Activated naive CD4-positive, alpha-beta T cell treated with anti-CD3 and anti-CD28 coated beads, Interleukin-2, amount 10 ng/mL, durations not matched to agents 7 days and 5 days (primary cell): ENCODE measurements at regions of chr7 and their contacts with region 1.

Region 1: DNA sequence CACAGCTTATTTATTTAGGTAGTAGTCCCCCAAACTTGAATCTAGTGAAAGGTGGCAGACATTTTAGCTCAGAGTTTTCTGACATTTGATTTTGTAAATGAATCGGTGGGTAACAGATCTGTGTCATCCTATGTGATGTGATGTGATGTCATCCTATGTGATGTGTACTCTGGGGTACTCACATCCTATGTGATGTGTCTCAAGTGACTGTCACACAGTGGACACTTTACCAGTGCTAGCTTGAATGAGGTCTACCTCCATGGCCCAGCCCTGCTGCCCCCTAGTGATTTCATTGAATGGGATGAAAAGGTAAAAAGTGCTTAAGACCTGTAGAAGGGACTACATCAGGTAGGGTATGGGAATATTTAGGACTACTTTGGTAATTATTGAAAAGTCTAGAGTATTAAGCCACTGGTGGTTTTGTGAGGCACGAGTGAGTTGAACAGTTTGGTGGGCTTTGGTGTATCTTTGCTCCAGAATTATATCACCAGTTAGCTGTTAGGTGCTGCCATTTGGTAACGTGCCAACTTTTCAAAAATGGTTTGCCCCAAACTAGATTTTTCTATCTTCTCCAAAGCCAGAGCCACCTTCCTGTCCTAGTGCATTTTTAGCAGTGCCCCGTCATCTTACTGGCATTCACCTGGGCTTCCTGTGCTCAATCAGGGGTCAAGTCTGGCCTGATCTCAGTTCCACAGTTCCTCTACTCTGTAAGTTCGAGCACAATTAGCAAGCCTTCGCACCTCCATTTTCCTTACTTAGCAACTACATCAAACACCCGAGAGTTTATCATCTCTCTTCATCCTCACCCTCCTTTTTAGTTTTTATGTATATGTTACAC is 9.7 kb downstream of the EIF4H start:
- DNase-seq: peak; percentile 31
- H3K4me3 Mint-ChIP-seq: no peak overlapping the region
- H3K27ac Mint-ChIP-seq: peak overlapping the region; percentile 33
- H3K4me1 Mint-ChIP-seq: peaks cover 60% of the 10 kb centered on the region
- H3K27me3 Mint-ChIP-seq: no peaks in the 10 kb centered on the region

Region 2: DNA sequence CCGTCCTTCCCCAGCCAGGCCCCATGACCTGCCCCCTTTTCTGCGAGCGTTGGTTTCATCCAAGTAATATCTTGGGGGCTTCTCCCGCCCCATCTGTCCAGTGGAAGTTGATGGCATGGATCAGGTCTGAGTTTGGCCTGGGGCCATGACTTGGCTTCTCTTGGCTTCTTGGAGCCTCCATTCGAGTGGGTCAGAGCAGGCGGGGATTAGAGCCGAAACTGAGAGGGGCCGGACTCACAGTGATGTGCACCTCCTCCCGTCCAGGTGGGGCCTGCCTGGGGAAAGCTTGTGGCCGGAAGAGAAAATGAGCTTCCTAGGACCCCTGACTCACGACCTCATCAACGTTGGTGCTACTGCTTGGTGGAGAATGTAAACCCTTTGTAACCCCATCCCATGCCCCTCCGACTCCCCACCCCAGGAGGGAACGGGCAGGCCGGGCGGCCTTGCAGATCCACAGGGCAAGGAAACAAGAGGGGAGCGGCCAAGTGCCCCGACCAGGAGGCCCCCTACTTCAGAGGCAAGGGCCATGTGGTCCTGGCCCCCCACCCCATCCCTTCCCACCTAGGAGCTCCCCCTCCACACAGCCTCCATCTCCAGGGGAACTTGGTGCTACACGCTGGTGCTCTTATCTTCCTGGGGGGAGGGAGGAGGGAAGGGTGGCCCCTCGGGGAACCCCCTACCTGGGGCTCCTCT is 115.3 kb before region 1 on chr7:
- CTCF ChIA-PET with region 1: interaction called, 11 read pairs
- DNase-seq: no peak
- H3K4me3 Mint-ChIP-seq: no peak overlapping the region
- H3K27ac Mint-ChIP-seq: no peak overlapping the region
- H3K4me1 Mint-ChIP-seq: peaks cover 2% of the 10 kb centered on the region
- H3K27me3 Mint-ChIP-seq: peaks cover 5% of the 10 kb centered on the region

Region 3: DNA sequence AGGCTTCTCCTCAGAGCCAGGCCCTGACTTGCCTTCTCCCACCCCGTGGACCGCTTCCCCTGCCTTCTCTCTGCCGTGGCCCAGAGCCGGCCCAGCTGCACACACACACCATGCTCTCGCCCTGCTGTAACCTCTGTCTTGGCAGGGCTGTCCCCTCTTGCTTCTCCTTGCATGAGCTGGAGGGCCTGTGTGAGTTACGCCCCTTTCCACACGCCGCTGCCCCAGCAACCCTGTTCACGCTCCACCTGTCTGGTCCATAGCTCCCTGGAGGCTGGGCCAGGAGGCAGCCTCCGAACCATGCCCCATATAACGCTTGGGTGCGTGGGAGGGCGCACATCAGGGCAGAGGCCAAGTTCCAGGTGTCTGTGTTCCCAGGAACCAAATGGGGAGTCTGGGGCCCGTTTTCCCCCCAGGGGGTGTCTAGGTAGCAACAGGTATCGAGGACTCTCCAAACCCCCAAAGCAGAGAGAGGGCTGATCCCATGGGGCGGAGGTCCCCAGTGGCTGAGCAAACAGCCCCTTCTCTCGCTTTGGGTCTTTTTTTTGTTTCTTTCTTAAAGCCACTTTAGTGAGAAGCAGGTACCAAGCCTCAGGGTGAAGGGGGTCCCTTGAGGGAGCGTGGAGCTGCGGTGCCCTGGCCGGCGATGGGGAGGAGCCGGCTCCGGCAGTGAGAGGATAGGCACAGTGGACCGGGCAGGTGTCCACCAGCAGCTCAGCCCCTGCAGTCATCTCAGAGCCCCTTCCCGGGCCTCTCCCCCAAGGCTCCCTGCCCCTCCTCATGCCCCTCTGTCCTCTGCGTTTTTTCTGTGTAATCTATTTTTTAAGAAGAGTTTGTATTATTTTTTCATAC is 62.2 kb before region 1 on chr7:
- CTCF ChIA-PET with region 1: no interaction called
- DNase-seq: no peak
- H3K4me3 Mint-ChIP-seq: no peak overlapping the region
- H3K27ac Mint-ChIP-seq: no peak overlapping the region
- H3K4me1 Mint-ChIP-seq: no peaks in the 10 kb centered on the region
- H3K27me3 Mint-ChIP-seq: no peaks in the 10 kb centered on the region

Region 4: DNA sequence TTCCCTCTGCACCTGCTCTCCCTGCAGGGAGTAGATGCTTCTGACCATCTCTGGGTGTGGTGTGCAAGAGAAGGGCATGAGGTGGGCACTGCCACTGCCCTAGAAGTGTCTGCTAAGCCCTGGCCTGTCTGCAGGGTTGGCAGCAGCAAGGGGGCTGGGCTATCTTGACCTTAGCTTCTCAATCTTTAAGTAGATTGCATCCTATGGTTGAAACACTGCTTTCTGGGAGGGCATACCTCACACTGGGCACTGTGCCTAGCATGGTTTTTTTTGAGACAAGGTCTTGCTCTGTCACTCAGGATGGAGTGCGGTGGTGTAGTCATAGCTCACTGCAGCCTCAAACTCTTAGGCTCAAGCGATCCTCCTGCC is 160.3 kb after region 1 on chr7:
- CTCF ChIA-PET with region 1: no interaction called
- DNase-seq: no peak
- H3K4me3 Mint-ChIP-seq: no peak overlapping the region
- H3K27ac Mint-ChIP-seq: no peak overlapping the region
- H3K4me1 Mint-ChIP-seq: no peaks in the 10 kb centered on the region
- H3K27me3 Mint-ChIP-seq: no peaks in the 10 kb centered on the region